Dendritic cell treated with granulocyte-macrophage colony-stimulating factor and Interleukin-4, amounts not matched to agents 40 ng/mL and 50 ng/mL, for 4 days (primary cell): ENCODE measurements at regions of chr4 and their contacts with region 1.

Region 1: DNA sequence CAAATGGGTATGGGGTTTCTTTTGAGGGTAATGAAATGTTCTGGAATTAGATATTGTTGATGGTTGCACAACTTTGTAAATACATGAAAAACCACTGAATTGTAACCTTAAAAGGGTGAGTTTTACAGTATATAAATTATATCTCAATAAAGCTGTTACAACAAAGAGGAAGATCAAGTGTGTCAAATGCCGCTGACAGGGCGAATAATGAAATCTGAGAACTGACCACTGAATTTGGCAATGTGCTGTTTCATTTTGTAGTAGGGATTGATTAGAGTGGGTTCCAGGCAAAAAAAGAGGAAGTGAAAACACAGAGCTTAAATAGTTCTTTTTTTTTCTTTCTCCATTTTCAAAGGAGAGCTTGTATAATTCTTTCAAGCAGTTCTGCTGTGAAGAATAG is 161.1 kb upstream of the NAP1L5 start:
- H3K4me3 Mint-ChIP-seq: peak overlapping the region; percentile 59
- H3K27ac Mint-ChIP-seq: peak overlapping the region; percentile 83
- H3K4me1 Mint-ChIP-seq: peaks cover 25% of the 10 kb centered on the region
- H3K27me3 Mint-ChIP-seq: no peaks in the 10 kb centered on the region

Region 2: DNA sequence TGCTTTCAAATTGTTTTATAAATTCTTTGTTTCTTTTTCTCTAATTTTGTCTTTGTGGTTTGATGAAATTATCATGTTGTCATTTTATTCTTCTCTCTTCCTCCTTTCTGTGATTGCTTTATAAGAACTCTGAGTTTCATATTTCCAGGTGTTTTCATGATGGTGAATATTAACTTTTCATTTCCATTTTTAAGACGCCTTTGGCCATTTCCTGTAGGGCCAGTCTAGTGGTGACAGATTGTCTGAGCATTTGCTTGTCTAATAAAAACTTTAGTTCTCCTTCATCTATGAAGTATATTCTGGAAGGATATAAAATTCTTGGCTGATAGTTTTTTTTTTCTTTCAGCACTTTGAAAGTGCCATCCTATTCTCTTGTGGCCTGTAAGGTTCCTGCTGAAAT is 70.1 kb after region 1 on chr4:
- intact Hi-C with region 1: no loop called
- H3K4me3 Mint-ChIP-seq: no peak overlapping the region
- H3K27ac Mint-ChIP-seq: no peak overlapping the region
- H3K4me1 Mint-ChIP-seq: peaks cover 13% of the 10 kb centered on the region
- H3K27me3 Mint-ChIP-seq: no peaks in the 10 kb centered on the region

Region 3: GRCh38 chr4:88953400-88953799 is 94.6 kb after region 1 on chr4:
- intact Hi-C with region 1: loop called (anchors 10 kb)
- H3K4me3 Mint-ChIP-seq: no peak overlapping the region
- H3K27ac Mint-ChIP-seq: no peak overlapping the region
- H3K4me1 Mint-ChIP-seq: peaks cover 44% of the 10 kb centered on the region
- H3K27me3 Mint-ChIP-seq: no peaks in the 10 kb centered on the region